ENCODE measurements at regions of chr19 and their contacts with region 1.

Region 1: GRCh38 chr19:55605207-55605636 is 225 bp upstream of the ZNF865 start:
- DNase-seq: peak; percentile 87 to 90 (median 88)
- H3K4me3 ChIP-seq: peak overlapping the region; percentile 64 to 92 (median 81)
- H3K4me3 Mint-ChIP-seq: peak overlapping the region; percentile 82 to 92
- H3K27ac ChIP-seq: peak overlapping the region; percentile 76 to 85
- H3K27ac Mint-ChIP-seq: peak overlapping the region; percentile 92 to 97 (median 93)
- H3K4me1 ChIP-seq: peaks cover 34 to 60% of the 10 kb centered on the region in 2 donors
- H3K4me1 Mint-ChIP-seq: peaks cover 62% of the 10 kb centered on the region
- H3K27me3 ChIP-seq: no peaks in the 10 kb centered on the region
- H3K27me3 Mint-ChIP-seq: no peaks in the 10 kb centered on the region
- CTCF ChIP-seq: no peak

Region 2: DNA sequence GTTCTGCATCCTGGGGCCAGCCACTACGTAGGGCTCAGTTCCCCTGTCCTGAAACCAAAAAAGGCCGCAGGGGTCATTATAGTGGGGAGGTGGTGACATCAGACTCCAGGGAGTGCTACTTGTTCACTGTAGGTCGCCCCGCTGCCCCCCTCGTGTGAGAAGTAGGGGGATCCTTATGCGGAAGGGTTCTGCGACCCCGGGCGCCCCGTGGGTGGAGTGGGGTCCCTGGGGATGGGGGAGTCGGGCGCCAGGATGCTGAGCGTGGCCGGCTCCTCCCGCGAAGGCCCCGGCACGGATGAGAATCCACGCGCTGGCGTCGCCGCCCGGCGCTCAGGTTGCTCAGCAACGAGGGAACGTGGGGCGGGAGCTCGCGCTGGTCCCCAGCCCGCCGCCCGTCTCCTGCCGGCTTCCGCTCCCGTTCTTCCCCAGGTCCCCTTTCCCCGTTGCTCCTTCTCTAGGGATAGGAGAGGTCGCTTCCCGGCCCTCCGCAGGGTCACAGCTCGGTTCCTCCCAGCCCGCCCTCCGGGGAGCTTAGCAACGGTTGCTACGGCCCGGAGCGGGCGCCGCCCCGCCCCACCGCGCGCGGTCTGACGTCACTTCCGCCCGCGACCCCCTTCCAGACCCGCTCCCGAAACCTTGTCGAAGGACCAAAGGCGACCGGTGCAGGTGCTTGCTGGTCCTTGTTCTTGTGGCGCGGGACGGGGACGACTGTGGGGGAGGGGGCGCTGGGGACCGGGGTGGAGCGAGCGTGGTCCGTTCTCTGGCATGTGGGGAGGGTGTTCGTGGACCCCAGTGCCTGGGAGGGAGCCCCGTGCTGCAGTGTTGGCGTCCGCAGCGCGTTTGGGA is 120.4 kb before region 1 on chr19 and contains the start of gene NAT14:
- intact Hi-C with region 1: no loop called
- DNase-seq: peak; percentile 25 to 41 (median 34)
- H3K4me3 ChIP-seq: peak within 1 kb of the TSS; percentile 8 to 69 (median 27)
- H3K4me3 Mint-ChIP-seq: peak within 1 kb of the TSS; percentile 71 to 72
- H3K27ac ChIP-seq: no peak within 1 kb of the TSS
- H3K27ac Mint-ChIP-seq: peak within 1 kb of the TSS in 6 of 7 donors; percentile 54 to 85 (median 70)
- H3K4me1 ChIP-seq: peaks cover 12 to 17% of the 10 kb centered on the region in 2 donors
- H3K4me1 Mint-ChIP-seq: peaks cover 17% of the 10 kb centered on the region
- H3K27me3 ChIP-seq: no peaks in the 10 kb centered on the region
- H3K27me3 Mint-ChIP-seq: peaks cover 5 to 32% (median 12%) of the 10 kb centered on the region in 3 donors
- CTCF ChIP-seq: no peak
- polyA plus RNA-seq, gene NAT14: 1.5 to 2.2 (median 1.9) TPM

Region 3: GRCh38 chr19:55516878-55517620 is 88.2 kb before region 1 on chr19:
- intact Hi-C with region 1: loop called in 1 of 2 experiments (anchors 5 kb)
- DNase-seq: peak; percentile 92 to 94 (median 94)
- H3K4me3 ChIP-seq: peak overlapping the region; percentile 37 to 70 (median 39)
- H3K4me3 Mint-ChIP-seq: peak overlapping the region; percentile 72 to 85
- H3K27ac ChIP-seq: peak overlapping the region in 1 of 2 donors; percentile 61
- H3K27ac Mint-ChIP-seq: peak overlapping the region; percentile 68 to 94 (median 91)
- H3K4me1 ChIP-seq: peaks cover 4 to 11% of the 10 kb centered on the region in 2 donors
- H3K4me1 Mint-ChIP-seq: peaks cover 3% of the 10 kb centered on the region
- H3K27me3 ChIP-seq: no peaks in the 10 kb centered on the region
- H3K27me3 Mint-ChIP-seq: peaks cover 3 to 11% (median 6%) of the 10 kb centered on the region in 3 donors
- CTCF ChIP-seq: peak; percentile 67

Region 4: GRCh38 chr19:55536951-55537740 is 68.1 kb before region 1 on chr19 and contains the start of gene SBK2:
- intact Hi-C with region 1: no loop called
- DNase-seq: no peak
- H3K4me3 ChIP-seq: no peak within 1 kb of the TSS
- H3K4me3 Mint-ChIP-seq: no peak within 1 kb of the TSS
- H3K27ac ChIP-seq: no peak within 1 kb of the TSS
- H3K27ac Mint-ChIP-seq: no peak within 1 kb of the TSS
- H3K4me1 ChIP-seq: no peaks in the 10 kb centered on the region
- H3K4me1 Mint-ChIP-seq: peaks cover 2% of the 10 kb centered on the region
- H3K27me3 ChIP-seq: no peaks in the 10 kb centered on the region
- H3K27me3 Mint-ChIP-seq: peaks cover 2 to 3% (median 2%) of the 10 kb centered on the region in 3 donors
- CTCF ChIP-seq: no peak
- polyA plus RNA-seq, gene SBK2: not detected

Region 5: DNA sequence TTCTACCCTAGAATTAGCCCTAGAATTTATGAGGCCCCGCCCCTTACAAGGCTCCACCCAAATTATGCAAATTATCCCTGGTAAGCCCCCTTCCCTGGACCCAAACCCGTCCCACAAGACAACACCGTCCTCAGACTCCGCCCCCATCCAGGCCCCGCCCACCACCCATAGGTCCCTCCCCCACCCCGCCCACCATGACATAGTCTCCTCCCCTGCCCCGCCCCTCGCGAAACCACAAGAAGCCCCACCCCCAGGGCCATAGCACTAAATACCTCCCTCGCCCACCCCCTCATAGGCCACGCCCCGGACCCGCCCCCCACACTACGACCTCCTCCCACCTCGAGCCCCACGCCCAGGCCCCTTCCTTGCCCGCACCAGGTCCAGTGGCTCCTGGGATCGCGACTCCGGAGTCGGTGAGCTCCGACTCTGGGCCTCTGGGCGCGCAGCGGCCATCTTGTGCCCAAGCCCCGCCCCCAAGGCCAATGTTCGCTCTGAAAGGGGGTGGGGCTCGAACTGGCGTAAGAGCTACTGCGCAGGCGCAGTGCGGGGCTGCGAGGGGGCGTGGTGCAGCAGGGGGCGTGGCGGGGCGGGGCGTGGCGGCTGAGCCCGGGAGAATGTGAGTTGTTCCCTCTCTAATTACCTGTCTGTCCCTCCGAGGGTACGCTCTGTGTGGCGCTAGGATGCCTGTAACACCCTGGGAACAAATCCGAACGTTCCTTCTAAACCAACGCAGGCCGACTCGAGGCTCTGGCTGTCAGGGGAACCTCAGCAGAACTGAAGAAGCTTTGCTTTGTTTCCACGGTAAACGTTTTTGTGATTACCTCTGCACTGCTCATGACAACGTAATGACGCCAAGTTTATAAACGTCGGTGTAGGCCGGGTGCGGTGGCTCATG is 19.1 kb after region 1 on chr19 and contains the start of gene ZNF784:
- intact Hi-C with region 1: loop called (anchors 2 kb)
- DNase-seq: peak; percentile 88 to 94 (median 91)
- H3K4me3 ChIP-seq: peak within 1 kb of the TSS; percentile 54 to 85 (median 63)
- H3K4me3 Mint-ChIP-seq: peak within 1 kb of the TSS; percentile 85 to 94
- H3K27ac ChIP-seq: peak within 1 kb of the TSS; percentile 78 to 86
- H3K27ac Mint-ChIP-seq: peak within 1 kb of the TSS; percentile 91 to 99 (median 98)
- H3K4me1 ChIP-seq: peaks cover 45 to 54% of the 10 kb centered on the region in 2 donors
- H3K4me1 Mint-ChIP-seq: peaks cover 40% of the 10 kb centered on the region
- H3K27me3 ChIP-seq: no peaks in the 10 kb centered on the region
- H3K27me3 Mint-ChIP-seq: peaks cover 0 to 8% (median 1%) of the 10 kb centered on the region in 3 donors
- CTCF ChIP-seq: no peak
- polyA plus RNA-seq, gene ZNF784: 1.5 to 5.5 (median 2.4) TPM

Region 6: GRCh38 chr19:55643348-55644176 is 38.3 kb after region 1 on chr19 and contains the start of gene ZNF581:
- intact Hi-C with region 1: loop called in 1 of 2 experiments (anchors 5 kb)
- DNase-seq: peak; percentile 69 to 90 (median 77)
- H3K4me3 ChIP-seq: peak within 1 kb of the TSS; percentile 46 to 83 (median 67)
- H3K4me3 Mint-ChIP-seq: peak within 1 kb of the TSS; percentile 87 to 97
- H3K27ac ChIP-seq: peak within 1 kb of the TSS; percentile 28 to 91
- H3K27ac Mint-ChIP-seq: peak within 1 kb of the TSS; percentile 80 to 92 (median 87)
- H3K4me1 ChIP-seq: peaks cover 58 to 73% of the 10 kb centered on the region in 2 donors
- H3K4me1 Mint-ChIP-seq: peaks cover 57% of the 10 kb centered on the region
- H3K27me3 ChIP-seq: peaks cover 0 to 5% of the 10 kb centered on the region in 2 donors
- H3K27me3 Mint-ChIP-seq: peaks cover 4 to 25% (median 23%) of the 10 kb centered on the region in 3 donors
- CTCF ChIP-seq: no peak
- polyA plus RNA-seq, gene ZNF581: 25.1 to 31.6 (median 29.4) TPM

Measured in CD14-positive monocyte (primary cell).